ACHN (cell line): ENCODE measurements at regions of chr7 and their contacts with region 1.

Region 1: DNA sequence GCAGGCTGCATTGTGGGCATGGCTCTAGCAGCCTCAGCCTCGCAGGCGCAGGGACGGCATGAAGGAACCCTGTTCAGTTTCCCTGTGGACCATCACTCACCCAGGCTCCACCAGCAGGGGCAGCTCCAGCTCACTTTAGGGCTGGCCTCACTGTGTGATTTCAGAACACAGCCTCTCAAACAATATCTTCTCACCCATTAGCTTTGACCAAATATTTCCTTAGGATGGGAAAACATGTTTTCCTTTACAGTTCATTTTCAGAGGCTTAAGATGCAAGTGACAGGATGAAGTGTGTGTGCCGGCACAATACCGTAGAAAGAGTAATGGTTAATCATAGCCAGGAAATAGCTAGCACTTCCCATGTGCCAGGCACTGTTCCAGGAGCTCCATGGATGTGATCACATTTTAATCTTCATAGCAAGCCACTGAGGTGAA is 58.2 kb downstream of the LANCL2 start:
- DNase-seq: no peak

Region 2: GRCh38 chr7:55280031-55280454 is 143.3 kb before region 1 on chr7:
- in situ Hi-C with region 1: loop called (anchors 10 kb)
- DNase-seq: peak; percentile 86

Region 3: DNA sequence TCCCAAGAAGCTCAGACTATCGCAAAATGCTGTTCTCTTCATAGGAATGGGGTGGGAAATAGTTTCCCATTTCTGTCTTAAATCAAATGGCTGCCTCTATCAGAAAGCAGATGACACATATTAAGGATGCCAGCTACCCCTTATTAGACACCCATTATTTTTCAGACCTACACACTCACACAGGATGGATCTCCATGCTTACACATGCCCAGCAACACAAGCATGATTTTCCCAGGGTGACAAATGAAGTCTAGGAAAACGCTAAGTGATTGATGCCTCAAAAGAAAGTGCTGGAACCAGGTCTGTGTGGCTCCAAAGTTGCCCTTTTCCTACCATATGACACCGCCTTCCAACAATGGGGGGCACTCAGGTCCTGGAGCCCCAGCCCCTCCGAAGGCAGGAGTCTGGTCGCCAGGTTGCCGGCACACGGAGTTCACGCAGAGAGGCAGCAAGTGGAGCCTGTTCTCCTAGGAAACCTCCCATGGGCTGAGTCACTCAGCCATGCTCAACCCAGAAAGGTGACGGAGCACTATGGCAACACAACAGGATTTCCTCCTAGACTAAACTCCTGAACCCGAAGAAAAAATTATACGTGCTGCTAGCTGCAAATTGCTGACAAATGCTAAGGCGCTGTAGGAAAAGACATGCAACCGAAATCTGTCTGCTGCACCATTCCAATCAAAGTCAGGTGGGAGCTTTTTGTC is 129.2 kb after region 1 on chr7:
- in situ Hi-C with region 1: no loop called
- DNase-seq: peak; percentile 90